ENCODE measurements at regions of chr14 and their contacts with region 1.

Region 1: GRCh38 chr14:100965296-100965695 is 61.8 kb upstream of the RTL1 start:
- DNase-seq: no peak
- H3K4me3 ChIP-seq: no peak overlapping the region
- H3K27ac ChIP-seq: no peak overlapping the region
- H3K4me1 ChIP-seq: no peaks in the 10 kb centered on the region
- H3K27me3 ChIP-seq: no peaks in the 10 kb centered on the region
- CTCF ChIP-seq: no peak
- POLR2A ChIP-seq: no peak

Region 2: DNA sequence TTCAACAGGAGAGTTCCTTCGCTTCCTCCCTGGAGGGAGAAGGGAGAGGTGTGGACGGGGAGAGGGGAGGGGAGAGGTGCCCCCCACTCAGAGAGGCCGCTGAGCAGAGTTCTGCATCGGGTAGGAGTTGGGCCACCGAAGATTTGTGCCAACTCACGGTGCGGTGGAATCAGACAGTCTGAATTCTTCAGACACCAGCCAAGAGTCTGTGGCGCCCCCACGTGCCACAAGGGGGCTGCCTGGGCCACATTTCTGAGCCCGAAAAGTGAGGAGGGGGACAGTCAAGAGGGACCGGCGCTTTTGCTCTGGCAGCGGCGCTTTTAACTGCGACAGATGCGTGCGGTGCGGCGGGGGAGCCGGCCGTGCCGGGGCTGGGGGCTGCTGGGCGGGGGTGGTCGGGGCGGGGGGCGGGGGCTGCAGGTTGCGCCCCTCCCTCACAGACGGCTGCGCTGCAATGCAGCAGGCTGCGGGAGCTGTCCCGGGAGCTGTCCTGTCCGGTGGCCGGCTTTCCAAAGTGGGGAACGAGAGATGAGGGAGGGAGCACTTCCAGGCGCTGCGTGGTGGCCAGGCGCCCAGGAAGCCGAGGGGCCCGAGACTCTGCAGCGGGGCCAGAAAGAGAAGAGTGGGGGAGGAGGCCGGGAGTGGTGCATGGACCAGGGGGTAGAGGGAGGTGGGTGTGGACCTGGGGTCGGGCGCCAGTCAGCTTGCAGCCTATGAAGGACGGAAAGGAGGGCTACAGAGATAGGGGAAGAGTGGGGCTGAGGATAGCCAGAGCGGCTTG is 60.8 kb before region 1 on chr14:
- intact Hi-C with region 1: no loop called
- DNase-seq: no peak
- H3K4me3 ChIP-seq: peak overlapping the region in 2 of 3 donors; percentile 26 to 35
- H3K27ac ChIP-seq: no peak overlapping the region
- H3K4me1 ChIP-seq: peaks cover 0 to 5% of the 10 kb centered on the region in 2 donors
- H3K27me3 ChIP-seq: peaks cover 0 to 22% of the 10 kb centered on the region in 2 donors
- CTCF ChIP-seq: no peak
- POLR2A ChIP-seq: no peak

Region 3: DNA sequence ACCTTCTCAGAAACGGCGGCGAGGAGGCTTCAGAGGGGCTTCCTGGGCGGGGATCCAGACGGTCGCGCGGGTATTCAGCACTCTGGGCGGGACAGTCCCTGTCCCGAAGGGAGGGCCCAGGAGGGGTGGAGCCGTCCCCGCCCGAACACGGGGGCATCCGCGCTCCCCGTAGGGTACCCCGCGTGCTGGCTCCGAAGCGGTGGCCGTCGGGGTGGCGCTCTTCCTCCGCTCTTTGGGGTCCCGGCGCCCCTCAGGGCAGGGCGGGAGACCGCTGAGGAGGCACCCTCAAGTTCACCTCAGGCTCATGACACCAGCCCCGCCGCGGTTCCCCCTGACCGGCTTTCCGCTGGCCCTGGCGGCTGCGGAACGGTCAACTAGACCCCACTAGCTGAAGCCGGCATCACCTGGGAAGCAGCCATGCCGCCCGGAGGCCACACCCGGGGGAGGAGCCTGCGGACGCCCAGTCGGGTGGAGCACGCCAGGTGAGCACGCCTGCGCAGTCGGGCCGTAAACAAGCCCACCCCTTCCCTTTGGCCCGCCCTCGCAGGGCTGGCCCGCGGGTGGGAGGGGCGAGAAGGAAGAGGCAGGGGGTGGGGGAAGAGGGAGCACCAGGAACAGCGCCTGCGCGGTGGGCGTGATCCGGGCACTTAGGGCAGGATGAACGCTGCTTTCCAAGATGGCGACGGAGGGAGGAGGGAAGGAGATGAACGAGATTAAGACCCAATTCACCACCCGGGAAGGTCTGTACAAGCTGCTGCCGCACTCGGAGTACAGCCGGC is 1174.1 kb after region 1 on chr14 and contains the start of gene WDR20:
- intact Hi-C with region 1: loop called (anchors 10 kb)
- DNase-seq: peak; percentile 97 to 98
- H3K4me3 ChIP-seq: peak within 1 kb of the TSS; percentile 88 to 94 (median 90)
- H3K27ac ChIP-seq: peak within 1 kb of the TSS; percentile 90
- H3K4me1 ChIP-seq: peaks cover 2 to 5% of the 10 kb centered on the region in 2 donors
- H3K27me3 ChIP-seq: no peaks in the 10 kb centered on the region
- CTCF ChIP-seq: no peak
- POLR2A ChIP-seq: peak; percentile 57
- total RNA-seq, gene WDR20: 19.5 to 42.0 (median 24.6) TPM